SK-N-SH (cell line): ENCODE measurements at regions of chr2 and their contacts with region 1.

Region 1: DNA sequence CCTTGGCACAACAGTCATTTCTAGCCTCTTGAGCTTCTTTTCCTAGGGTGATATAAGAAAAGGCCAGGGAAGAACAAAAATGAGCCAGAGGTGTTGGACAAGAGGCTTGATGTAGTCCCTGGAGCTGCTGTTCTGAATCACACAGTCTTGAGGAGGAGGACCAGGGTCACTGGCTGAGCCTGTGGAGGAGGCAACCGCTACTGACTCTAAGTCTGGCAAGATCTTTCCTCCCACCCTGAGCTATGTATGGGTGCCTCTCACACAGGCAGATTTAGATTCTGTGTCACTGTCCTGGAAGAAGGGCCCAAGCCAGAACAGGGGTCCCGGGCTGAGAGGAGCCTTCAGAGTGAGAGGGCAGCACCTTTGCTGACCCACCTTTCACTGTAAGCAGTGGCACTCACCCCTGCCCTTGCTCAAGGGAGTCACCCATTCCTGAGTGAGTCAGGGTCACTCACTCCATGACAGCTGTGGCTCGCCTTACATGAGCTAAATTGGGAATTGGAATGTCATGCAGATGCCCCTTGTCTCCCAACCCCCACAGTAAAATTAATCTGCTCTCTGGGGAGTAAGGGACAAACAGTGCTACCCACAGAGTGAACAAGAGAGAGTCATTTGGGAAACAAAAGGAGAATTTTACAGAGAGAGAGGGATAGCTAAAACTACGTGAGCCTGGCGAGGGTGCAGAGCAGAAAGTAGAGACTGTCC is at the start of gene TRIM54:
- DNase-seq: no peak
- H3K4me3 ChIP-seq: no peak within 1 kb of the TSS
- H3K27ac ChIP-seq: no peak within 1 kb of the TSS
- H3K4me1 ChIP-seq: peaks cover 0 to 23% of the 10 kb centered on the region in 2 experiments; a peak in 3 of 4 replicates
- H3K27me3 ChIP-seq: peaks cover 12% of the 10 kb centered on the region; the same call in 1 of the 2 replicates
- CTCF ChIP-seq: no peak
- EP300 ChIP-seq: no peak
- RAD21 ChIP-seq: no peak
- polyA plus RNA-seq, gene TRIM54: 0.28 and 0.36 TPM in 2 replicates

Region 2: DNA sequence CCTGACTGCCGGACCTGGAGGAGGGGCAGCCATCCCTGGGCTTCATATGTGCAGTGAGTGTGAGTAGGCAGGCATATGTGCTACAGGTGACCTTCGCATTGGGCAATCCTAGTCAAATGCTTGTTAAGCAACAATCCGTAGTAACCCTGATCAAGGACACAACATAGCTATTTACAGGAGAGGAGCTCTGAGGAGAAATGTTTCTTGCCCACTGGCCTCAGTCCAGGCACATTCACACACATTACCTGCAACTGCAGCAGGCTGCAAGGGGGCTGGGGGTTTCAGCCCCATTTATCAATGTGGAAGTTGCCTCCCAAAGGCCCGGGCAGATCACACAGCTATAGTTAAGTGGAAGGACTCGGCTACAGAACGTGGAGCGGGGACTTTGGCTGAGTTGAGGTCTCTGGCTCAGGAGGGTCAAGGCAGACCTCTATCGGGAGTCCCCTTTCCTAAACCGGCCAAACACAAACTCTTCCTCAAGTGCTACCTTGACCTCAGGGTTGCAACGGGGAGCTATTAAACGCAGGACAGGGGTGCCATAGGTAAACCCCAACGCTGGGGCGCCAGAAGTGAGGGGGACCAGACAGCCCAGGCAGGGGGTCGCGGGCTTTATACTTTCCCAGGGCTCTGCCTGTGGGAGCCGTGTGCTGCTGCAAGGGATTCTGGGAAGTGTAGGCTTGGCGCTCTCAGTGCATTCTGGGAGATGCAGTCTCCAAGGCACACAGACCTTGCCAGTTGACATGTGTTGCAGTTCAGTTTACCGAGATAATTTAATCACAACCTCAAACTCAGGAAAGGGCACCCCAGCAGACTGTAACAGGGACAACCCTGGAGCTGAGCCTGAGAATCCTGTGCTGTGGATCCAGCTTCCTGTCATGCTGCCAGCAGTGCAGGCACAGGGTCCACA is 186.0 kb before region 1 on chr2:
- CTCF ChIA-PET with region 1: interaction called, 169 read pairs
- POLR2A ChIA-PET with region 1: interaction called, 5 read pairs
- DNase-seq: peak; percentile 91
- H3K4me3 ChIP-seq: peak overlapping the region in 1 of 2 experiments; percentile 43; a peak in 2 of 4 replicates
- H3K27ac ChIP-seq: peak overlapping the region in 1 of 2 experiments; percentile 92; a peak in 2 of 4 replicates
- H3K4me1 ChIP-seq: peaks cover 4 to 21% of the 10 kb centered on the region in 2 experiments; a peak in 2 of 4 replicates
- H3K27me3 ChIP-seq: no peaks in the 10 kb centered on the region
- CTCF ChIP-seq: no peak
- EP300 ChIP-seq: no peak
- RAD21 ChIP-seq: peak; percentile 35

Region 3: DNA sequence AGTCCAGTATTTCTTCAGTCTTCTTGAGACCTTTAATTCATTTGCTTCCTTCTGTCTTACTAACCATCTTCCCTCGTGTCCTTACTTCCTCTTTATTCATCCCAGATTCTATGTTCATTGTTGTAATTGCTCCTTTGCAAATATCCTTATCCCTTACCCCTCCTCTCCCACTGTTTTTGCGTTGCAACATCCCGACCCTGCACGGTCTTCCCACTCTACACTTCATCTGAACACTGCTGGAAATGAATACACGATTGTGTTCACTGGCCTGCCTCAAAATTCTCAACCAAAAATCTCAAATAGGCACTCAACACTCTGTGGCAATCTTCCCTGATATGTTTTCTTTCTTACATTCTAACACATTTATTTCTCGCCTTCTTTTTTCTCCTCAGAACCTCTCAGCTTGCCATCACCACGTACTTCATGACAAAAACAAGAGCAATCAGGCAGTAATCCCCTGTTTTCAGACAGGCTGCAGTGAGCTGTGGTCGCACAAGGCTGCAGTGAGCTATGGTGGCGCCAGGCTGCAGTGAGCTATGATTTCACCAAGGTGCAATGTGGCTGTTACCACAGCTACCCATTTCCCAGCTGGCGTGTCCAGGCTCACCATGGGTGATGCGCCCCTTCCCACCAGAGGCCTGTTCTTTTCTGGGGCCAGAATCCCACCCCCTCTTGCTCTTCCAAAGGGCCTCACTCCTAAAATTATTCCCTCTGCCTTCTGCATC is 107.5 kb before region 1 on chr2:
- CTCF ChIA-PET with region 1: interaction called, 32 read pairs
- POLR2A ChIA-PET with region 1: interaction called, 3 read pairs
- DNase-seq: no peak
- H3K4me3 ChIP-seq: no peak overlapping the region
- H3K27ac ChIP-seq: no peak overlapping the region
- H3K4me1 ChIP-seq: peaks cover 3 to 5% of the 10 kb centered on the region in 2 experiments; a peak in 3 of 4 replicates
- H3K27me3 ChIP-seq: no peaks in the 10 kb centered on the region
- CTCF ChIP-seq: no peak
- EP300 ChIP-seq: no peak
- RAD21 ChIP-seq: no peak

Region 4: DNA sequence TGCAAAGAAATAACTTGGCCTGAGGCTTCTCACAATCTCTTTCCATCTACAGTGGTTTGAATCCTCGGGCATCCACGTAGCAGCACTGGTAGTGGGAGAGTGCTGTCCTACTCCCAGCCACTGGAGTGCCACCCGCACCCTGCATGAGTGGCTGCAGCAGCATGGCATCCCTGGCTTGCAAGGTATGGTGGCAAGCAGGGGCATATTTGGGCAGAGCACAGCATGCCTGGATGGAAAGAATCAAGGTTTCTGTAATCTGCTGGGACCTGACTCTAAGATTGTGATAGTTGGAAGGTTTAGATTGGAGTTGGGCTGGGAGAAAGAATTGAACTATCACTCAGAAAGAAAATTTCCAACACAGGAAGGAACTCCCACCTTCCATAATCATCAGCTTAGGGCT is 60.8 kb before region 1 on chr2:
- CTCF ChIA-PET with region 1: interaction called, 18 read pairs
- POLR2A ChIA-PET with region 1: no interaction called
- DNase-seq: no peak
- H3K4me3 ChIP-seq: no peak overlapping the region
- H3K27ac ChIP-seq: no peak overlapping the region
- H3K4me1 ChIP-seq: peaks cover 4 to 14% of the 10 kb centered on the region in 2 experiments; a peak in 3 of 4 replicates
- H3K27me3 ChIP-seq: no peaks in the 10 kb centered on the region
- CTCF ChIP-seq: no peak
- EP300 ChIP-seq: no peak
- RAD21 ChIP-seq: no peak

Region 5: GRCh38 chr2:27255660-27256059 is 26.3 kb before region 1 on chr2:
- CTCF ChIA-PET with region 1: interaction called, 392 read pairs
- POLR2A ChIA-PET with region 1: interaction called, 3 read pairs
- DNase-seq: no peak
- H3K4me3 ChIP-seq: no peak overlapping the region
- H3K27ac ChIP-seq: peak overlapping the region; percentile 36 to 82
- H3K4me1 ChIP-seq: peaks cover 14 to 18% of the 10 kb centered on the region in 2 experiments
- H3K27me3 ChIP-seq: peaks cover 5% of the 10 kb centered on the region; the same call in 1 of the 2 replicates
- CTCF ChIP-seq: no peak
- EP300 ChIP-seq: no peak
- RAD21 ChIP-seq: no peak

Region 6: DNA sequence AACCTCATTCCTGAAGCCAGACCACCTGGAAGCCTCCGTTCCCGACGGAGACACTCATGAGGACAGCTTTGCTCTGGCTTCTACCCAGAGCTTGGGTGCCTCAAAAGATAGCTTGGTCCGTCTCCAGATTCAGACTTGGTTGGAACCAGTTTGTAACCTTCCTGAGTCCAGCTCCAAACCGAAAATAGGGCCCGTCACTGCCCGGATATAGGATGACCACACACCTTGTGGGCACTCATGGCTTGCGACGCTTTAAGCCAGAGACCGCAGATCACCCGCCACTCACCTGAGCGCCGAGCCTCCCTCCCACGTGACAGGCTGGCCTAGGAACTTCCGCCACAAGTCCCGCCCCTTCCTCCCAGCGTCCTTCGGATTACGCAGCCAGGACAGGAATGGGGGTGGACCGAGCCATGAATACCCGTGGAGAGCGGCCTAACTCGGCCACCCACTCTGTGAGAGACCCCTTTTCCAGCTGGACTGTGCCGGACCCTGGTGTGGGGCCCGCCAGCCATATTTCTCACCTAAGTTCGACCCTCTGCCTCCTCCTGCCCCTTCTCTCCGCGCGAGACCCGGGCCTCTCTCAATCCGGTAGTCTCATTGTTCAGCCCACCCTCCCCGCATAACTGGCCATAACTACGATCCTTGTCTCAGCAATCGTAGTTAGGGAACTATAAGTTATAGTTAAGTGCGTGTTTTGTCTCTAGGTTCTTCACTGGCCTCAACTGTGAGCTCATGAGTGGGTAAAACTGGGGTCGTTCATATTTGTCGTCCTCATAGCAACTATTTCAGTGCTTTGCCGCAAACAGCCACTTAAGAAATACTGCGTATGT is 41.0 kb after region 1 on chr2 and contains the start of gene MPV17:
- CTCF ChIA-PET with region 1: interaction called, 13 read pairs
- POLR2A ChIA-PET with region 1: no interaction called
- DNase-seq: peak; percentile 98
- H3K4me3 ChIP-seq: peak within 1 kb of the TSS; percentile 76 to 93
- H3K27ac ChIP-seq: peak within 1 kb of the TSS; percentile 90 to 98
- H3K4me1 ChIP-seq: peaks cover 9 to 23% of the 10 kb centered on the region in 2 experiments; a peak in 3 of 4 replicates
- H3K27me3 ChIP-seq: no peaks in the 10 kb centered on the region
- CTCF ChIP-seq: no peak
- EP300 ChIP-seq: no peak
- RAD21 ChIP-seq: no peak
- polyA plus RNA-seq, gene MPV17: 255 and 265 TPM in 2 replicates